ENCODE measurements at regions of chr18 and their contacts with region 1.

Region 1: DNA sequence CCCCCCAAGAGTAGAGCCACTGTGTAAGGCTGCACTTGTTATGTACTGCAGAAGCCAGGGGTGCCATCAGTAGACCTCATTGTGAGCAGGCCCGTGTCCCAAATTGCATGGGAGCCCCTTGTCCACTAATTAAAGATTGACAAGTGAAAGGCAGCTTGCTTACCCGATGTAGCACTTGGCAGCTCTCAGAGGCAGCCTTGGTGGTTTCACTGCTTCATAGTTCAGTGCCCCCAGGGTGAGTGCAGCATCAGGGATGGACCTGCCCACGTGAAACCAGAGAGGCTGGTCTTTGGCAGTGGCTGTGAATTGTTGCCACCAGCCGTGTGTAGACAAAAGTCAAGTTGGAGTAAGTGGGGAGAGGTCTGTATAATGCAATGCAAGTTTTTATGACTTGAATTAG is 13.3 kb downstream of the TUBB6 start:
- DNase-seq: no peak
- ATAC-seq: no peak

Region 2: GRCh38 chr18:12361770-12362378 is 40.5 kb after region 1 on chr18:
- intact Hi-C with region 1: loop called (anchors 5 kb)
- DNase-seq: peak; percentile 86
- ATAC-seq: peak; percentile 74